Uterus (tissue), 4 donors: ENCODE measurements at regions of chr20 and their contacts with region 1.

Region 1: DNA sequence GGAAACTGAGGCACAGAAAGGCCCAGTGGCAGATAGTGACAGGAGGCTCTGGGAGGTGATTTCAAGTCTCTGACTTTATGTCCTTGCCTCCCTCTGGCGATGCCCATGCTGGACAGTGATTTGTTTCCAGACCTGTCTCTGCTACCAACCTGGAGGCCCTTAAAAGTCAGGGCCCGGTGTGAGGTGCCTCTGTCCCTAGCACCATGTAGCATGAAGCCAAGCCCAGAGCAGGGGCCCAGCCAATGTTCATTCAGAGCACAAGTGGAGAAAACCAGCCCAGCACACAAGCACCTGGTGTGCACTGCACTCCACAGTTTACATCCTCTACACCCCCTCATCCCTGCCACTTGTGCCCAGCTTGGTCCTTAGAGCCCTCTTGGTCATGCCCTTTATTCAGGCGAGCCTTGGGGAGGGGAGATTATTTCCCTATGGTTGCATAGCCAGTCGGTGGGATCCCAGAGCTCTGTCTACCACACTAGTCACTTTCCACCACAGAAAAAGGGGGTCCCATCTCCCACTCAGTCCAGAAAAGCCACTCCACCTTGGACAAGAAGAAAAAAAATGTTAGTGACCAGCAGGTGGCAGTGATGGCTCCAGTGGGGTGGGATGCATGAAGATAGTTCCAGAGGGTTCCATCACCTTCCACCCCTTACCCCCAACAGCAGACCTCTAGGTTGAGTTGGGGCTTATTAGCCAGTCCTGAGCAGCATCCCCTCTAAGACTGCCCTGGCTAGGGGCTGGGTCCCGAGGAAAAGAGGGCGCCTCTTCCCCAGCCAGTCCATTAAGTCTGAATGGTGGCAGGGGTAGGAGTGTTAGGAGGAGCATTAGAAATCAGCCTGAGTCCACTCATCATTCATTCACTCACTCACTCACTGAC is 30.9 kb downstream of the KIAA1755 start:
- DNase-seq: no peak
- H3K4me3 ChIP-seq: no peak overlapping the region
- H3K27ac ChIP-seq: no peak overlapping the region
- H3K4me1 ChIP-seq: no peaks in the 10 kb centered on the region
- H3K27me3 ChIP-seq: no peaks in the 10 kb centered on the region
- CTCF ChIP-seq: peak in 3 of 4 experiments; percentile 4 to 40 (median 33)
- POLR2A ChIP-seq: no peak

Region 2: DNA sequence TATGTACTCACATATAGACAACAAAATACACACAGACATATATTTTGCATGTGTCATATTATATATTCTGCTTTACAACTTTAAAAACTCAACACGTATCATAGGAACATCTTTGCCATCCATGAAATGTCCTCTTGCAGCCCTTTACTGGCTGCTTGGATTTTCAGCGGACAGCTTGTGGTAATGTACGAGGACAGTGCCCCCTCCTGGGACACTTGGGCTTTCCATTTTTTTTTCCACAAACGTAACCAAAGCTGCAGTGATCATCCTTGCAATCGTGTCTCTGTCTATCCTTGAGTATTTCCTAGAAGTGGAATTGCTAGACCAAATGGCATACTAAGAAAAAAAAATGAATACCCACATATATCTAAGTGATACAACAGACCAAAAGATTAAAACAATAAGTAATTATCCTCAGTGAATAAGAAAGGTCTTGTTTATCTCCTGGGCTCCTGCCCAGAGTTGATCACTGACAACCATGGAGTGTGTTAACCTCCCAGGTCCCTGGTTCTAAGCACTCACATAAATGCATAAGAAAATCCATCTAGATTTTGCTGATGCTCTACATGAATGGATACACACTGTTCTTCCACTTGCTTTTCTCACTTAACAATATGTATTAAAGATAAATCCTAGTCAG is 92.5 kb after region 1 on chr20:
- intact Hi-C with region 1: loop called (anchors 10 kb)
- DNase-seq: peak; percentile 47 to 60
- H3K4me3 ChIP-seq: no peak overlapping the region
- H3K27ac ChIP-seq: no peak overlapping the region
- H3K4me1 ChIP-seq: no peaks in the 10 kb centered on the region
- H3K27me3 ChIP-seq: no peaks in the 10 kb centered on the region
- CTCF ChIP-seq: peak; percentile 51 to 68 (median 59)
- POLR2A ChIP-seq: no peak

Region 3: GRCh38 chr20:38855356-38855755 is 625.7 kb after region 1 on chr20:
- intact Hi-C with region 1: no loop called
- DNase-seq: no peak
- H3K4me3 ChIP-seq: no peak overlapping the region
- H3K27ac ChIP-seq: peak overlapping the region in 1 of 2 donors; percentile 2
- H3K4me1 ChIP-seq: no peaks in the 10 kb centered on the region
- H3K27me3 ChIP-seq: no peaks in the 10 kb centered on the region
- CTCF ChIP-seq: no peak
- POLR2A ChIP-seq: no peak